Activated CD4-positive, alpha-beta T cell treated with anti-CD3 and anti-CD28 coated beads, Interleukin-2, amount 10 ng/mL, durations not matched to agents 24 days and 14 days (primary cell): ENCODE measurements at regions of chr10 and their contacts with region 1.

Region 1: DNA sequence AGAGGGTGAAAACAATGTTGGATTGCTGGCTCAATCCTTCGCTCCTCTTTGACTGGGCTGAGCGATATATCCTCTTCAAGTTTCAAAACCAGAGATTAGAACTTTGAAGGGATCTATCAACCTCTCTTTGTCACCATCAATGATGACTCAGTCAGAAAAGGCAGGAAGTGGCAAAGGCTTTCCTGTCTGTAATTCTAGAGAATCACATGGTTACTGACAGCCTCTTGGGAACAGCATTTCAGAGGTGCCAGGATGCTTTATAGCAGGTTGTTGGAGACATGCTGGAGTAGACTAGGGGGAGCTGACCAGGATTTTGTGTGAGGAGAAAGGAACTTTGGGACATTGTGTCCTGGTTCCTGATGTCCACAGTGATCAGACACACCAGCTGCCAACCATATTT is 81.3 kb downstream of the PRKCQ start:
- DNase-seq: peak; percentile 89
- H3K4me3 Mint-ChIP-seq: peak overlapping the region; percentile 78
- H3K27ac Mint-ChIP-seq: peak overlapping the region; percentile 84
- H3K4me1 Mint-ChIP-seq: peaks cover 42% of the 10 kb centered on the region
- H3K27me3 Mint-ChIP-seq: no peaks in the 10 kb centered on the region

Region 2: DNA sequence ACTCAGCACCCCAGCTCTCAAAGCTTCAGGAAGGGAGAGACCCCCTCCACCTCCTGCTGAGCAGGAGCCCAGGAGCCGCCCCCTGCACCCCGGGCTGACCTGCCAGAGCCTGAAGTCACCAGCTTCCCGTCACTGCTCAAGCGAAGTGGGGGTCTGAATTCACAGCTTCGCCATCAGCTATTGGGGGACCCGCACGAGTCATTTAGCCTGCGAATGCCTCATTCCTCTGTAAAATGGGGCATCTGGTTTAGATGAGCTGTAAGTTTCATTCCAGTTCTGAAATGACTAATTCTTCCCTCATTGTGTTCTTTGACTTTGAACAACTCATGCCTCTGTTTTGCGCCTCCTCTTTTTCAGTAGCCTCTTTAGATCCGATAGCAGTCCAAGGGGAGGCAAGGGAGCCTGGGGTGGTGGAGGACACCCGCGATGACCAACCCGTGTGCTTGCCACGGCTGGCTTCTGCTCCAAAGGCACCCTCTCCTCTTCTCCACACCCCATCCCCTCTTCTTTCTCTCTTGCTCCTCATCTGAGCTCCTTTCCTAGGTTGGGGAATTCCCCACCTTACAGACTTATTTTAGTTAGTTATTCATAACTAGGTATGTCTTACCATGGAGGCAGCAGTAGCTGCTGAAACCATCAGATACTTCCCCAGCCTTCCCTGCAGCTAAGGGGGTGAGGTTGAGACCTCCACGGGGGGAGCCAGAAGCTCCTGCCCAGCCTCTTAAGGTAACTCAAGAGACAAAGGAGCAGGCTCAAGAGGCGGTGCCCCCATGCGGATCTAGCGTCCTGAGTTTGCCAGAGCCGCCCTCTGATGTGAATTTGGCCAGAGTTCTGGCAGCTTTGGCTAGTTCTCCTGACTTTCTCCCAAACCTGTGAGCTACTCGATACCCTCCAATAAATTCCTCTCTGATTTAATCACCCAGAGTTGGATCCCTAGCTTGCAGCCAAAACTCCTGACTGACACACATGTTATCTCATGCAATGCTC is 362.3 kb before region 1 on chr10:
- intact Hi-C with region 1: loop called (anchors 10 kb)
- DNase-seq: peak; percentile 85
- H3K4me3 Mint-ChIP-seq: peak overlapping the region; percentile 66
- H3K27ac Mint-ChIP-seq: peak overlapping the region; percentile 81
- H3K4me1 Mint-ChIP-seq: peaks cover 52% of the 10 kb centered on the region
- H3K27me3 Mint-ChIP-seq: peaks cover 1% of the 10 kb centered on the region

Region 3: DNA sequence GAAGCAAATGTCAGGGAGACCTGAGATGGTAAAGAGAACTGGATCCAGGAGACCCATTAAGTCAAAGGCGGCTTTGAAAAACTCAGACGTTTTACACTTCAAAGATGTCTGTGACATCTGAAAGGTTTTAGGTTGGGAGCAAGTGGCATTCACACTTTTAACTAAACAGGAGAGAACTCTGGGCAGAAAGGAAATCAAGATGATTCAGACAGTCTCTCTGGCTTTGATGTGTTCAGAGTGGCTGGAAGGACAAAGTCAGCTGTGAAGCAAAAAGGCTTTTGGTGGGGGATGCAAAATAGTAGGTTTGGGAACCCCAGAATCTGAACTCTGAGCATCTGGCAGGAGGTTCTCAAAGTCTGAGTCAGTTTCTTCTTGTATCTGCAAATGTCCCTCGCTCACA is 14.7 kb after region 1 on chr10:
- intact Hi-C with region 1: loop called (anchors 2 kb)
- DNase-seq: peak; percentile 78
- H3K4me3 Mint-ChIP-seq: peak overlapping the region; percentile 75
- H3K27ac Mint-ChIP-seq: peak overlapping the region; percentile 91
- H3K4me1 Mint-ChIP-seq: peaks cover 61% of the 10 kb centered on the region
- H3K27me3 Mint-ChIP-seq: no peaks in the 10 kb centered on the region